PC-3 (cell line): ENCODE measurements at regions of chr11 and their contacts with region 1.

Region 1: GRCh38 chr11:91396236-91397133 is 828.1 kb upstream of the FAT3 start:
- DNase-seq: peak; percentile 93
- ATAC-seq: peak; percentile 75
- H3K4me3 ChIP-seq: peak overlapping the region; percentile 53
- H3K27ac ChIP-seq: peak overlapping the region; percentile 86
- H3K4me1 ChIP-seq: peaks cover 47% of the 10 kb centered on the region
- H3K27me3 ChIP-seq: no peaks in the 10 kb centered on the region
- CTCF ChIP-seq: no peak

Region 2: GRCh38 chr11:91163619-91164451 is 232.7 kb before region 1 on chr11:
- CTCF ChIA-PET with region 1: no interaction called
- POLR2A ChIA-PET with region 1: no interaction called
- intact Hi-C with region 1: loop called (anchors 10 kb)
- DNase-seq: peak; percentile 89
- ATAC-seq: peak; percentile 30; the same call in 1 of the 2 replicates
- H3K4me3 ChIP-seq: peak overlapping the region; percentile 14; the same call in 1 of the 2 replicates
- H3K27ac ChIP-seq: peak overlapping the region; percentile 19; the same call in 1 of the 2 replicates
- H3K4me1 ChIP-seq: peaks cover 37% of the 10 kb centered on the region
- H3K27me3 ChIP-seq: no peaks in the 10 kb centered on the region
- CTCF ChIP-seq: no peak

Region 3: GRCh38 chr11:91299980-91300379 is 96.5 kb before region 1 on chr11:
- CTCF ChIA-PET with region 1: no interaction called
- POLR2A ChIA-PET with region 1: no interaction called
- intact Hi-C with region 1: loop called (anchors 5 kb)
- DNase-seq: peak; percentile 91
- ATAC-seq: peak; percentile 52
- H3K4me3 ChIP-seq: no peak overlapping the region
- H3K27ac ChIP-seq: peak overlapping the region; percentile 77
- H3K4me1 ChIP-seq: peaks cover 63% of the 10 kb centered on the region
- H3K27me3 ChIP-seq: no peaks in the 10 kb centered on the region
- CTCF ChIP-seq: no peak

Region 4: DNA sequence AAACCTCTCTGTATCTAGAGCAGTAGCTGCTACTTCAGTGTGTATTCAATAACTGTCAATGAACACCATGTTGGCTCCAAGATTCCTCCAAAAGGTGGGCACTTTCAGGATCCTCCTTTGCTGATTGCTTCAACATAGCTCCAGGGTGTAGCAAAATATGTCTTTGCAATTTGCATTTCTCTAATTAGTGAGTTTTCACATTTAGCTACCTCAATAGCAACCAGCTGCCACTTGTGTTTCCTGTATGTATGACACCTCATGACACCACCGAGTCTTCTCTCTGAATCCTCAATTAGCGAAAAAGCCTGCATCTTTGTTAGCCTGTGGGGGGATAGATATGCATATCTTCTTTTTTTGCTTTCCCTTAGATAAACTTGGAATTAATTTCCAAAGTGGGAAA is 70.2 kb before region 1 on chr11:
- CTCF ChIA-PET with region 1: no interaction called
- POLR2A ChIA-PET with region 1: no interaction called
- intact Hi-C with region 1: no loop called
- DNase-seq: no peak
- ATAC-seq: no peak
- H3K4me3 ChIP-seq: no peak overlapping the region
- H3K27ac ChIP-seq: no peak overlapping the region
- H3K4me1 ChIP-seq: no peaks in the 10 kb centered on the region
- H3K27me3 ChIP-seq: no peaks in the 10 kb centered on the region
- CTCF ChIP-seq: no peak

Region 5: GRCh38 chr11:91350931-91351330 is 45.6 kb before region 1 on chr11:
- CTCF ChIA-PET with region 1: no interaction called
- POLR2A ChIA-PET with region 1: no interaction called
- intact Hi-C with region 1: no loop called
- DNase-seq: no peak
- ATAC-seq: no peak
- H3K4me3 ChIP-seq: no peak overlapping the region
- H3K27ac ChIP-seq: no peak overlapping the region
- H3K4me1 ChIP-seq: no peaks in the 10 kb centered on the region
- H3K27me3 ChIP-seq: no peaks in the 10 kb centered on the region
- CTCF ChIP-seq: no peak

Region 6: DNA sequence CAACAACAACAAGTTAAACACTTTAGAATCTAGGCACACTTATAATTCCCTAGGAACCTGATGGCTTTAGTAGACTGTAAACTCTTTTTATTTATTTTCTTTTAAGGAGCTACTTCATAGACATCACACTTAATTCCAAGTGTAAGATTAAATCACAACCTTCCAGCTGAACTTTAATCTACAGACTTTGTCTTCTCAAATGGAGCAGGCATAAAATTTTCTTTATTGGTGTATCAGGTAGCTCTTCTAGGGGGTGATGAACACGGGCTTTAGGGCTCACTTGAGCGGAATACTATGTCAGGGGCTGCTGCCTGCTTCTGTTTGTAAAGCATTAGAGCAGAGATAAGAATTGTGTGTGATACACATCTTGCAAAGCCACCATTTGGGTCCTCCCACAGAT is 302.4 kb after region 1 on chr11:
- CTCF ChIA-PET with region 1: no interaction called
- POLR2A ChIA-PET with region 1: no interaction called
- intact Hi-C with region 1: no loop called
- DNase-seq: no peak
- ATAC-seq: no peak
- H3K4me3 ChIP-seq: no peak overlapping the region
- H3K27ac ChIP-seq: no peak overlapping the region
- H3K4me1 ChIP-seq: no peaks in the 10 kb centered on the region
- H3K27me3 ChIP-seq: no peaks in the 10 kb centered on the region
- CTCF ChIP-seq: no peak